ENCODE measurements at regions of chr9 and their contacts with region 1.

Region 1: GRCh38 chr9:14198841-14199455 is 115.0 kb downstream of the NFIB start:
- DNase-seq: peak; percentile 41
- H3K4me3 ChIP-seq: no peak overlapping the region
- H3K27ac ChIP-seq: peak overlapping the region; percentile 45 to 68 (median 52)
- H3K4me1 ChIP-seq: peaks cover 9 to 49% (median 26%) of the 10 kb centered on the region in 4 donors
- H3K27me3 ChIP-seq: no peaks in the 10 kb centered on the region
- CTCF ChIP-seq: no peak
- EP300 ChIP-seq: no peak
- POLR2A ChIP-seq: no peak

Region 2: DNA sequence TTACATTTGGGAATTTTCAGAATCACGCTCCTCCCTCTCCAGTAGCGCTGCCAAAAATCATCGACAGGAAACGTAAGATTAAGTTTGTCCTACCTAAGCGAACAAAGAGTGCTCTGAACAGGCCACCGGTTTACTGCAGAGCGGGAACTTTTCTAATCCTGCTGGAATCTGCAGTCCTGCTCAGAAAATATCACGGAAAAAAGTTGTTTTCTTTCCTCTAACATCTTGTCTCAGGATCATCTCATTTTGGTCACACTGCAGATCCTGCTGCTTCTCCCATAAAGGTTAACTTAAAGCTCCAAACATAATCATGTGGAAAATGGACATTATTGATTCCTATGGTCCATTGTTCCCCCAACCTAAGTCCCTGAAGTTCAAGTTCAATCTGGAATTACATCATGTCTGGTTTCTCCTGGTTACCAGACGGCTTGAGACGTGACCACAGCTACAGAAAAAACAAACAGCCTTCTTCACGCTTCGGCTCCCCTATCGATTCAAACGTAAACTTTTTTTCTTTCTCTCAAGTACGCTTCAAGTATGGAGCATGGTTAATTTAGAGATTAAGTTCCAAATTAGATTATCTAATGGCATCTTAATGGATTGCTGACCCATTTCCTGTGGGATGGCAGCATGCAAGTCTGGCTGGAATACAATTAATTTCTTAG is 102.6 kb before region 1 on chr9:
- in situ Hi-C with region 1: no loop called
- intact Hi-C with region 1: loop called (anchors 10 kb)
- DNase-seq: no peak
- H3K4me3 ChIP-seq: no peak overlapping the region
- H3K27ac ChIP-seq: peak overlapping the region; percentile 51 to 64 (median 57)
- H3K4me1 ChIP-seq: peaks cover 0 to 26% (median 2%) of the 10 kb centered on the region in 4 donors
- H3K27me3 ChIP-seq: no peaks in the 10 kb centered on the region
- CTCF ChIP-seq: no peak
- EP300 ChIP-seq: no peak
- POLR2A ChIP-seq: no peak

Region 3: DNA sequence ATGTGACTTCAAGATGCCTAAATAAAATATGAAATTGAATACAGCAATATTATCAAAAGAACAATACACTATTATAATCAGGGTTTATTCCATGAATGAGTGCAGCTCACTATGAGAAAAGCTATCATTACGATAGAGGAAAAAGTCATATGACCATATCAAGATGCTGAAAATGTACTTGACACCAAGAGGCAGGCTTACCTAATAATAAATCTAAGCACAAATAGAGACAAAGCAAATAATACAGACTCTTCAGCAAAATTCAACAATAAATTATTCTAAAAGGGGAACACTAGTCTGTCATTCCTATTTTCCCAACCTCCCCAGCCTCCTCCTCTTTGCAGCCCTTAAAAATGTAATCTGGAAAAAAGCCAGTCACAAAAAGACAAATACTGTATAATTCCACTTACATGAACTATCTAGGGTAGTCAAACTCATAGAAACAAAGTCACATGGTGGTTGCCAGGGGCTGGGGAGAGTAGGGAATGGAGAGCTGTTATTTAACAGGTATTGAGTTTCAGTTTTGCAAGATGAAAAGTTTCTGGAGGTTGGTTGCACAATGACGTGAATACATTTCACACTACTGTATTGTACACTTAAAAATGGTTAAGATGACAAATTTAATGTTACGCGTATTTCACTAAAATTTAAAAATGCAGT is 33.4 kb before region 1 on chr9:
- in situ Hi-C with region 1: no loop called
- intact Hi-C with region 1: loop called (anchors 1 kb)
- DNase-seq: no peak
- H3K4me3 ChIP-seq: no peak overlapping the region
- H3K27ac ChIP-seq: no peak overlapping the region
- H3K4me1 ChIP-seq: peaks cover 0 to 4% (median 0%) of the 10 kb centered on the region in 4 donors
- H3K27me3 ChIP-seq: no peaks in the 10 kb centered on the region
- CTCF ChIP-seq: no peak
- EP300 ChIP-seq: no peak
- POLR2A ChIP-seq: no peak